Mammary epithelial cell (primary cell): ENCODE measurements at regions of chr16 and their contacts with region 1.

Region 1: GRCh38 chr16:832652-833336 is 32.3 kb upstream of the GNG13 start:
- DNase-seq: no peak
- H3K4me3 ChIP-seq: no peak overlapping the region
- H3K27ac ChIP-seq: no peak overlapping the region
- H3K4me1 ChIP-seq: no peaks in the 10 kb centered on the region
- H3K27me3 ChIP-seq: no peaks in the 10 kb centered on the region
- CTCF ChIP-seq: no peak

Region 2: DNA sequence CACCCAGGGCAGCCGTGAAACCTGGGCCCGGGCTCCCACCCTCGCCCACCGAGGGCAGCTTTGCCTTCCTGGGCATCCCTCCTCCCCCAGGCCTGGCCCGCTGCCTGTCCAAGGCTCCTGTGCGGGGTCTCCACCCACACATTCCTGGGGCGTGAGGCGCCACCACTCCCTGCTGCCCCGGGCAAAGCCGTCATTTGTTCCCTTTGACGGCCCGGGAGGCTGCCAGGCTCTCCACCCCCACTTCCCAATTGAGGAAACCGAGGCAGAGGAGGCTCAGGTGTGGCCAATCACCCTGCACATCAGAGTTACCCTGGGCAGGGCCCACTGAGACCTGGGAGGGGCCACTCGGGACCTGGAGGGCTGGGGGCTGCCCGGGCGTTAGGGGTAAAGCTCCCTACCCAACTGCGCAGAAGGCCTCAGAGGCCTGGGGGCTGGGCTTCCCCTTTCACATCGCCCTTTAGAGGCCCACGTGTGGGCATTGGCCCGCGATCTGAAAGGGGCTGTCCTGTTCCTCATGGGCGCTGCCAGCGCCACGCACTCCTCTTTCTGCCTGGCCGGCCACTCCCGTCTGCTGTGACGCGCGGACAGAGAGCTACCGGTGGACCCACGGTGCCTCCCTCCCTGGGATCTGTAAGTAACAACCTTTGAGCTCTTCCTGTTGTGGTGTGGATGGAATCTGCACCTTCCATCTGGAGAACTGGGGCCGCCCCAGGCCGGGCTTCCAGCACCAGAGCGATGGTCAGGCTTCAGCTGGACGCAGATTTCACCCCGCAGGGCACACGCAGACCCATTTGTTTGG is 72.0 kb before region 1 on chr16 and contains the start of gene MSLN:
- CTCF ChIA-PET with region 1: no interaction called
- dilution Hi-C with region 1: no loop called
- in situ Hi-C with region 1: no loop called
- intact Hi-C with region 1: no loop called
- DNase-seq: peak; percentile 47
- H3K4me3 ChIP-seq: no peak within 1 kb of the TSS
- H3K27ac ChIP-seq: peak within 1 kb of the TSS; percentile 13
- H3K4me1 ChIP-seq: peaks cover 22% of the 10 kb centered on the region
- H3K27me3 ChIP-seq: no peaks in the 10 kb centered on the region
- CTCF ChIP-seq: no peak
- total RNA-seq, gene MSLN: 1.4 to 17.8 TPM

Region 3: GRCh38 chr16:901715-902601 is 69.2 kb after region 1 on chr16:
- CTCF ChIA-PET with region 1: no interaction called
- dilution Hi-C with region 1: no loop called
- in situ Hi-C with region 1: no loop called
- intact Hi-C with region 1: no loop called
- DNase-seq: no peak
- H3K4me3 ChIP-seq: no peak overlapping the region
- H3K27ac ChIP-seq: no peak overlapping the region
- H3K4me1 ChIP-seq: no peaks in the 10 kb centered on the region
- H3K27me3 ChIP-seq: no peaks in the 10 kb centered on the region
- CTCF ChIP-seq: no peak

Region 4: GRCh38 chr16:1146409-1146808 is 313.6 kb after region 1 on chr16:
- CTCF ChIA-PET with region 1: no interaction called
- dilution Hi-C with region 1: loop called (anchors 10 kb)
- in situ Hi-C with region 1: no loop called
- intact Hi-C with region 1: no loop called
- DNase-seq: no peak
- H3K4me3 ChIP-seq: no peak overlapping the region
- H3K27ac ChIP-seq: no peak overlapping the region
- H3K4me1 ChIP-seq: no peaks in the 10 kb centered on the region
- H3K27me3 ChIP-seq: no peaks in the 10 kb centered on the region
- CTCF ChIP-seq: no peak